GM10248 (cell line): ENCODE measurements at regions of chr9 and their contacts with region 1.

Region 1: GRCh38 chr9:121201738-121202533 is at the start of gene RAB14:
- DNase-seq: peak; percentile 99
- CTCF ChIP-seq: peak; percentile 60

Region 2: DNA sequence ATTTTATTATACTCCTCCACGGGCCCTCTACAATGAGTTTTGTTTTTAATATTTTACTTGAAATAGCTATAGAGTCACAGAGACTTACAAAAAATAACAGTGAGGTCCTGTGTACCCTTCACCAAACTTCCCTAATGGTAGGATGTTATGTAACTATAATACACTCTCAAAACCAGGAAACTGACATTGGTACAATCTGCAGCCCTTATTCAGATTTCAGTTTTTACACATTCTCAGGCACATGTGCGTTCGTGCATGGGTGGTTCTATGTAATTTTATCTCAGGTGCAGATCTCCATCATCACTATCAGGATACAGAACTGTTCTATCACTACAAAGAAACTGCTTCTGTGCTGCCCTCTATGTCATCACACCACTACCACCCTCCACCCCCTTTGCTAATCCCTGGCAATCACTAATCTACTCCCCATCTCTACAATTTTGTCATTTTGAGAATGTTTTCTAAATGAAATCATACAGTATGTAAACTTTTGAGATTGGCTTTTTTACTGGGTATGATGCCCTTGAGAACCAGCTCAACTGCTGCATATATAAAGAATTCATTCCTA is 16.7 kb before region 1 on chr9:
- CTCF ChIA-PET with region 1: interaction called, 24 read pairs
- POLR2A ChIA-PET with region 1: no interaction called
- DNase-seq: no peak
- CTCF ChIP-seq: no peak

Region 3: DNA sequence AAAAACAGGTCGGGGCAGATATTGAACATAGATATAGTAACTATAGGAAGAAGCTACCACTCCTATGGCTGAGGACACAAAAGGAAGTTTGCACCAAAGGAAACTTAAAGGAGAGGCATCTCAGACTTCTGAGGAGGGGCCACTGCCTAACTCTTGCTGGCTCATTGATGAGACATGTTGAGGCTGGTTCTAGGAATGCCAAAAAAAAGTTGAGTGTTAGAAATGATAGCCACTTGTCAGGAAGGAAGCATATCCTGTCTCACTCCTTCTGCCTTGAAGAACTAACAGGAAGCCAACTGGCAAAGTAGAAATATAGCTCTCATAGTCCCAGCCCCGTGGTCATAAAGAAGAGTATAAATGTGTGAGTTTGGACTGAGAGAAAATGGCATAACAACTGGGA is 191.4 kb after region 1 on chr9:
- CTCF ChIA-PET with region 1: no interaction called
- POLR2A ChIA-PET with region 1: no interaction called
- DNase-seq: no peak
- CTCF ChIP-seq: no peak